HepG2 (cell line): ENCODE measurements at regions of chr5 and their contacts with region 1.

Region 1: GRCh38 chr5:96729156-96729555 is 67.0 kb downstream of the CAST start:
- DNase-seq: no peak
- ATAC-seq: no peak
- H3K4me3 ChIP-seq: no peak overlapping the region
- H3K27ac ChIP-seq: no peak overlapping the region
- H3K4me1 ChIP-seq: no peaks in the 10 kb centered on the region
- H3K27me3 ChIP-seq: no peaks in the 10 kb centered on the region
- CTCF ChIP-seq: peak; percentile 34; the same call in 1 of the 2 replicates
- EP300 ChIP-seq: no peak
- POLR2A ChIP-seq: no peak
- RAD21 ChIP-seq: no peak

Region 2: GRCh38 chr5:96315431-96315830 is 413.7 kb before region 1 on chr5:
- CTCF ChIA-PET with region 1: no interaction called
- POLR2A ChIA-PET with region 1: no interaction called
- in situ Hi-C with region 1: no loop called
- intact Hi-C with region 1: no loop called
- DNase-seq: no peak
- ATAC-seq: no peak
- H3K4me3 ChIP-seq: no peak overlapping the region
- H3K27ac ChIP-seq: no peak overlapping the region
- H3K4me1 ChIP-seq: peaks cover 21% of the 10 kb centered on the region
- H3K27me3 ChIP-seq: no peaks in the 10 kb centered on the region
- CTCF ChIP-seq: no peak
- EP300 ChIP-seq: no peak
- POLR2A ChIP-seq: no peak
- RAD21 ChIP-seq: no peak

Region 3: DNA sequence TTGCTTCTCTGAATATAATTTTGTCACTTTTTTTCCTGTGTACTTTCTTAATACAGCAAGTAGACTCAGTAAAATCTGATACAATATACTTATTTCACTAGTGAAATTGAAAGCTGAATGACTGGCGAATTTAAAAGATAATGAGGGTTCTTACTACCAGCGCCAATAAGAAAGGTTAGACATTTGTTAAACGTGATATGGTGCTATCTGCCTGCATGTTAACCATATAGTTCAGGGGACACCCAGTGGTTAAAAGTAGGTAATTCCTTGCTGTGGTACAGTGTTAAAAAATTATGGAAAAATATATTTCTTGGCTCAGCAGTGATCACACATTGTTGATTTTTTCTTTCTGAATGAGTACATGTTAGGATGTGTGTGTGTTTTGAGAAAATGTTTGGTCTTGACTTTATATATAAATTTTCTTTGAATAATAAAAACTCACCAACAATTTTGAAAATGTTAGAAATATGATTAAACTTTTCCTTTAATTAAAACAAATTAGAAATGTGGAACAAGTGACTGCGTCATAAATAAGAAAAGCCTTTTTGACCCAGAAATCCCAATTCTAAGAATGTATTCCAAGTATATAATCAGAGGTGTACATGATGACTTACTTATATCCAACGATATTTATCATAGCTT is 41.2 kb before region 1 on chr5:
- CTCF ChIA-PET with region 1: no interaction called
- POLR2A ChIA-PET with region 1: no interaction called
- in situ Hi-C with region 1: no loop called
- intact Hi-C with region 1: loop called (anchors 1 kb)
- DNase-seq: peak; percentile 49
- ATAC-seq: peak; percentile 95
- H3K4me3 ChIP-seq: no peak overlapping the region
- H3K27ac ChIP-seq: no peak overlapping the region
- H3K4me1 ChIP-seq: peaks cover 9% of the 10 kb centered on the region; the same call in 1 of the 2 replicates
- H3K27me3 ChIP-seq: no peaks in the 10 kb centered on the region
- CTCF ChIP-seq: peak; percentile 63
- EP300 ChIP-seq: no peak
- POLR2A ChIP-seq: no peak
- RAD21 ChIP-seq: peak; percentile 33; the same call in 1 of the 2 replicates

Region 4: DNA sequence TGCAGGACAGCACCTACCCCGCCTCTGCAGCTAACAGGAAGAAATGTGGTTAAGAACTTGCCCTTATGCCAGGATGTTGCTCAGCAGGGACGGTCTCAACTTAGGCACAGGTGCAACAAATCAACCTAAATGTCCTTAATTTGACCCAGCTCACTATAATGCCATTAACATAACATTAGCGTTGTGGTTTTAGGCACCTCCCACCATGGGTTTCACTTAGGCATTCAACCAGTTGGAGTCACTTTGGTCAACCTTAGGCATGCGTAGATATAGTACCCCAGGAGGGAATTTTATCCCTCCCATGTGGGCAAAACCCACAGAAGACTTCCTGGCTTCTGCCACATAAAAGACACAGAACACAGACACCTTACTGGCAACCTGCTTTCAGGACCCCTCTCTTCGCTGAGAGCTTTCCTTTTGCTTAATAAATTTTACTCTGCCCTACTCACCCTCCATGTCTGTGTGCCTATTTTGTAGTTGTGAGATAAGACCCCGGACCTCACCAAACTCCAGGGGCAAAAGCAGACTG is 87.3 kb after region 1 on chr5:
- CTCF ChIA-PET with region 1: no interaction called
- POLR2A ChIA-PET with region 1: no interaction called
- in situ Hi-C with region 1: no loop called
- intact Hi-C with region 1: no loop called
- DNase-seq: no peak
- ATAC-seq: no peak
- H3K4me3 ChIP-seq: no peak overlapping the region
- H3K27ac ChIP-seq: no peak overlapping the region
- H3K4me1 ChIP-seq: peaks cover 5% of the 10 kb centered on the region
- H3K27me3 ChIP-seq: no peaks in the 10 kb centered on the region
- CTCF ChIP-seq: no peak
- EP300 ChIP-seq: no peak
- POLR2A ChIP-seq: no peak
- RAD21 ChIP-seq: no peak